ENCODE measurements at regions of chr20 and their contacts with region 1.

Region 1: DNA sequence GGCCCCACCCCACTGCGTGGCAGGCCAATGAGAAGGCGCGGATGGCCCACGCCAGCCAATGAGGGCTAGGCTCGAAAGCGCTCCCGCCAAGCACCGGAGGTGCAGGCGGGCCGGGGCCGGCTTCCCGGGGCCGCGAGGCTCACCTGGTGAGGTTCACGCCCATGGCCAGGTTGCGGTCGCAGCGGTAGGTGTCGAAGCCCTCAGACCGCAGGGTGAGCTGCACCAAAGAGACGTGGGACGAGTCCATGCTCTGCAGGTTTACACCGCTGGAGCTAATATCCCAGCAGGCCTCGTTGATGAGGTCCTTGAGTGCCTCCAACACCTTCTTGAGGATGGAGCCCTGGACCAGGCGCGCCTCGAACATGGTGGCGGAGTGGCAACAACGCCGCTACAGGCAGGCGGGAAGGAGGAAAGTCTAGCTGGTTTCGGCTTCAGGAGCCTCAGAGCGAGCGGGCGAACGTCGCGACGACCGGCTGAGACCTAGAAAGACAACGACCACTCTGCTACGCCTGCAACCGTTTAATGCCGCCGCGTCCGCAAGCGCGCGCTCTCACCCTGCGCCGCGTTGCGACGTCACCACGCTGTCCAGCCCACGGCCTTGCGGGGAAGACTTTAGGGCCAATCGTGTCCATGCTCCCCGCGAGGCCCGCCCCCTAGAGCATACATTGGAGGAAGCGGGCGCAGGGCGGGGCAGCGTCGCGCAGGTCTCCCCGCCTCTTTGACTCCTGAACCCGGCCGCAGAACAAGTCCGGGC is at the start of gene PCNA:
- DNase-seq: peak; percentile 98
- ATAC-seq: peak; percentile 99 to 100 (median 99)
- H3K4me3 ChIP-seq: peak within 1 kb of the TSS; percentile 80
- H3K27ac ChIP-seq: peak within 1 kb of the TSS; percentile 84
- H3K4me1 ChIP-seq: peaks cover 16% of the 10 kb centered on the region
- H3K27me3 ChIP-seq: no peaks in the 10 kb centered on the region
- CTCF ChIP-seq: no peak
- total RNA-seq, gene PCNA: 13.2 to 19.1 (median 16.3) TPM

Region 2: DNA sequence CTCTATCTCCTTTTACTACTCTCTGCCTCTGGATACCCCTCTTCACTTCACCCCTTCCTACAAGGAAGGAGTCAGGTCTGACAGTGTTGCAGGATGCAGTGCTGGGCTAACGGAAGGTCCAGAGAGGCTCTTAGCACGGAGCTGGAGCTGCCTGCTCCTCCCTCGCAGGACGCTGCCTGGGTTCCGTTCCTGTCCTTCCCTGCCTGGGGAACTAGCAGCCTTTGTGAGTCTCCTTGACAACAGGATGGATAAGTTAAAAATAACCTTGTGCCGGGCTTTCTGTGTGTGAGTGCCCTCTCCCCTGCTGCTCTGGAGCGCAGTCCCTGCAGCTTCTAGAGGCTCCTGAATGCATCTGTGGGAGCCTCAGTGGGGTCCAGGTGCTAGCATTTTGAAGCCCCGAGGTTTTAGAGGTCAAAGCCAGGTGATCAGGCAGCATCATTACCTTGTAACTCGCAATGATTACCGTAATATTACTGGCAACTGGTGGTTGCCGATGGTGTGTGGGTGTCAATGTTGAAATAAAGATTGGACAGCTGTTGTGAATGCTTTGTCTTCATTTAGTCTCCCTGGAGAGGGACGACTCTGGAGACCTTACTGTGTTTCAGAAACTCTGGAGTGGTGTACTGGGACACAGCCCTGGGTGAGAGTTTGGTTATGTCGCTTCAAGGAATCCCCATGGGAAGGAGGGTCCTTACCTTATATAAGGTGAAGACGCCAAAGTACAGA is 51.6 kb after region 1 on chr20:
- intact Hi-C with region 1: loop called in 1 of 2 experiments (anchors 5 kb)
- DNase-seq: peak in 1 of 2 donors; percentile 22
- ATAC-seq: peak; percentile 38 to 59 (median 54)
- H3K4me3 ChIP-seq: peak overlapping the region; percentile 25
- H3K27ac ChIP-seq: peak overlapping the region; percentile 63
- H3K4me1 ChIP-seq: peaks cover 76% of the 10 kb centered on the region
- H3K27me3 ChIP-seq: no peaks in the 10 kb centered on the region
- CTCF ChIP-seq: no peak

Measured in psoas muscle (tissue), 8 donors.